Activated CD8-positive, alpha-beta T cell treated with anti-CD3 and anti-CD28 coated beads for 36 hours (primary cell): ENCODE measurements at regions of chr1 and their contacts with region 1.

Region 1: GRCh38 chr1:117654493-117655219 is 48.8 kb downstream of the TENT5C start:
- DNase-seq: peak; percentile 35
- ATAC-seq: peak; percentile 54
- H3K4me3 Mint-ChIP-seq: no peak overlapping the region
- H3K27ac Mint-ChIP-seq: peak overlapping the region; percentile 60
- H3K4me1 Mint-ChIP-seq: peaks cover 76% of the 10 kb centered on the region
- H3K27me3 Mint-ChIP-seq: peaks cover 31% of the 10 kb centered on the region
- CTCF ChIP-seq: no peak

Region 2: GRCh38 chr1:117367047-117368018 is 287.3 kb before region 1 on chr1 and contains the start of gene MAN1A2:
- CTCF ChIA-PET with region 1: no interaction called
- POLR2A ChIA-PET with region 1: interaction called, 3 read pairs
- intact Hi-C with region 1: loop called (anchors 10 kb)
- DNase-seq: peak; percentile 75
- ATAC-seq: peak; percentile 65
- H3K4me3 Mint-ChIP-seq: peak within 1 kb of the TSS; percentile 90
- H3K27ac Mint-ChIP-seq: peak within 1 kb of the TSS; percentile 98
- H3K4me1 Mint-ChIP-seq: peaks cover 45% of the 10 kb centered on the region
- H3K27me3 Mint-ChIP-seq: no peaks in the 10 kb centered on the region
- CTCF ChIP-seq: no peak
- total RNA-seq, gene MAN1A2: 18.3 to 21.1 TPM

Region 3: DNA sequence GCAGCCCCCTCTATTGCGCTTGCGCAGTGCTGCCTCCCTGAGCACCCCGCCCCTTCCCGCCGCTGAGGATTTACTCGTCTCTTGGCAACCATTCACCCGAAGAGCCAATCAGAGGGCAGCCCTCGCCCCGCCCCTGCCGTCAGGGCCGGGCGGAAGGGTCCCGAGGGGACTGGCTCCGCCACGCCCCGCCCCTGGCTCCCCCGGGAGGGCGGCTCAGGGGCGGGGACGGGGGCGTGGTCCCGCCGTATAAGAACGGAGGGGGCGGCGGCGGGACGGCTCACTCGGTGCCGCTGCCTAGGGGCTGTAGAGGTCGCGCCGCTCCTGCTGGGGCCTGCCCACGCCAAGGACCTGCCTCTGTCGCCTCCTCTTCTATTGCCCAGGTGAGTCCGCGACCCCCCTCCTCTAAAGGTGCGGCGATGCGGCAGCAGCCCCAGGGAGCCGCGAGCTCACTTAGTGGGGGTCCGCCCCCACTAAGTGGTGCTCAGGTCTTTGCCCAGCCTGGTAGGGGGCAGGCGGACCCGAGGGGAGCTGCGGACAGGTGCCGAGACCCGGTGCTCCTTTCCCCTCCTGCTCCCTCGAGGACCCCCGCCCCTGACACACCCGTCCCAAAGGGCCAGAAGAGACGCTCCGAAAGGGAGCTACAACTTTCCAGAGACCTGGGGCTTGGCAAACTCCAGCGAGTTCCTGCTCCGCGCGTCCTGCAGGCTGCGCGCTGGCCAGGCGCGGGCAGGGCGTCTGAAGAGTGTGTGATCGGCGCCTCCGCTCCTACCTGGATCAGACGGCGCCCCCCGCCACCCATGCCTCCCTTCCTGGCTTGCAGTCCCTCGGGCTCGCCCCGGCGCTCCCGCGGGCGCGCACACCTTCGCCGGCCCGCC is 48.6 kb before region 1 on chr1 and contains the start of gene TENT5C:
- CTCF ChIA-PET with region 1: interaction called, 26 read pairs
- POLR2A ChIA-PET with region 1: interaction called, 23 read pairs
- intact Hi-C with region 1: loop called (anchors 2 kb)
- DNase-seq: peak; percentile 98
- ATAC-seq: peak; percentile 96
- H3K4me3 Mint-ChIP-seq: peak within 1 kb of the TSS; percentile 84
- H3K27ac Mint-ChIP-seq: peak within 1 kb of the TSS; percentile 91
- H3K4me1 Mint-ChIP-seq: peaks cover 32% of the 10 kb centered on the region
- H3K27me3 Mint-ChIP-seq: peaks cover 13% of the 10 kb centered on the region
- CTCF ChIP-seq: no peak
- total RNA-seq, gene TENT5C: 13.1 to 13.6 TPM

Region 4: DNA sequence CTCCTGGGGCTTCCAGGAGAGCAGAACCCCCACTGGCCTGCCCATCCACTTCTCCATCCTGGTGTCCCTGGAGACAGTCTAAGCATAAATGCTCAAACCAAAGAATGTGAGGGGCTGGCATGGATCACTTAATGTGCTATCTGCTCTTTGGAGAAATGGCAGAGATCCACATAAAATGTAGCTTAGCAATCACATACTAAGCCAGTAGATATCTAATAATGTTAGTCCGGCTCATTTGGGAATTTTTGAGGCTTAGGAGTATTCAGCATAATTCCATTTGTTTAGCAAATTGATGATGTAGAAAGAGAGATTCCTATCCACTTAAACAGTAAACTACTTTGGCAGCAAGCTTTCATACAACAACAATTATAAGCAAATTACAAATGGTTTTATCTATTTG is 41.9 kb after region 1 on chr1:
- CTCF ChIA-PET with region 1: no interaction called
- POLR2A ChIA-PET with region 1: no interaction called
- intact Hi-C with region 1: no loop called
- DNase-seq: no peak
- ATAC-seq: no peak
- H3K4me3 Mint-ChIP-seq: no peak overlapping the region
- H3K27ac Mint-ChIP-seq: no peak overlapping the region
- H3K4me1 Mint-ChIP-seq: no peaks in the 10 kb centered on the region
- H3K27me3 Mint-ChIP-seq: peaks cover 13% of the 10 kb centered on the region
- CTCF ChIP-seq: no peak